ENCODE measurements at regions of chr11 and their contacts with region 1.

Region 1: GRCh38 chr11:47847892-47848635 is at the start of gene NUP160:
- DNase-seq: peak; percentile 74 to 95 (median 92)

Region 2: DNA sequence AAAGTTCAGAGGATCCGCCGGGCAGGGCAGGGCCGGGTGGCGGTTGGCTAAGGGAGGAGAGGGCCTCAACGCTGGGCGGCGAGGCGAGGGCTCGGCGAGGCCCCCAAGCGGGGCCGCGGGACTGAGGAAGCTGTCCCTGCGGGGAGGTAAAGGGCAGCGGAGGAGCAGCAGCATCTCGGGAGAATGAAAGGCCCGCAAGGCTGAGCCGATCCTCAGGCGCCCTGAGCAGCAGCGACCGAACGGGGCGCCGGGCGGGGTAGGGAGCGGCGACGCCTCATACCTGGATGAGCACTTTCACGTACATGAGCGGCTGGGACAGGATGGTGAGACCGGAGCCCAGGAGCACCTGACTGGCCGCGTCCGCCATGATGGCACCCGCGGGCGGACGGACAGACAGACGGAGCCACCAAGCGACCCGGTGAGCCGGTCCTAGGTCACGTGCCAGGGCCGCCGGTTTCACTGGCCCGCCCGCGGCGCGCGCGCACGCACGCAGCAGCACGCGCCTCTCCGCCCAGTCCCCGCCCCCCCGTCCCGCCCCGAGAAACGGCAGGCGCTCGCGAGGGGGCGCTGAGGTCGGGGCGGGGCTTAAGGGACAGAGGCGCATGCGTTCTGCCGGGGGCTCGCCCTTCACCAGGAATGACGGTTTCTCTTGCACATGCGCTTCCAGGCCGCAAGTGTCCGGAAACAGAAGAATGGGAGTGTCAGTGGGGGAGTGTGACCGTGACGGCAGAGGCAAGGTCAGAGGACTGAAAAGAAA is 205.8 kb before region 1 on chr11 and contains the start of gene MTCH2:
- intact Hi-C with region 1: loop called (anchors 5 kb)
- DNase-seq: peak; percentile 89 to 98 (median 94)

Region 3: DNA sequence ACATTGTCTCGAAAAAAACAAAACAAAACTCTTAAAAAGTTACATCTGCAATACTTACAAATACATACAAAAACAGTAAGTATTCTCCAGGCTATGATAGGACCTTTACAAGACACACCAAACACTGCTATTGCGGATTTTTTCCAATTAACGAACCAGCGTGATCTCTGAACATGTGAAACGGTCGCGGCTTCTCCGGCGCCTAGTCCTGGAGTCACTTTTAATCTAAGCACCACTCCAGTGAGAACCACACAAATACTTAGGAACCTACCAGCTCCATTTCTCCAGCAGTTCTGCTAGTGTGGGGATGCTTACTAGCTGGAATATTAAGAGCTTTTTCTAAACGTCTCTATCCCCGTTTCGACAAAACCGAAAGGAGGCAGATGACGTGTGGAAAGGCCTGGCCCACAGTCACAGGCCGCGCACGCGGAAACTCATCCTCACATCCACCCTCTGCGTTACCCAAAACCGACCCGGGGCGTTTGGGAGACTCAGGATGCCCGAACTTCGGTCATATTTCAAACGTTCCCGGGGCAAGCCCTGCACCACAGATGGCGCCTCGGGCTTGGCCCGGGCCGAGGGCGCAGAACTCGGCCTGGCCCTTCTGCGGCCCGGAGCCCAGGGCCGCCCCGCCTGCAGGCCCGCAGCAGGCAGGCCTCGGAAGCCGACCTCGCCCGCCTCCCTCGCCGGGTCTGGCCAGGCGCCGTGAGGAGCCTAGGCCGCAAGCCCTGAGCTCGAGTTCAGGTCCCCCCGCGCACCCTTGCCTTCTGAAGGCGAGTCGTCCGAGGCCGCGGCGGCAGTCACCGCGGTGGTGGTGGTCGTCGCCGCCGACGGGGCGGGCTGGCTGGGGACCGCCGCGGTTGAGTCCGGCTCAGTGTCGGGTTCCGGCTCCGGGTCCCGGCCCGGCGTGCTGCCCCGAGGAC is 81.5 kb before region 1 on chr11:
- intact Hi-C with region 1: loop called (anchors 5 kb)
- DNase-seq: peak; percentile 33 to 85 (median 71)

Region 4: DNA sequence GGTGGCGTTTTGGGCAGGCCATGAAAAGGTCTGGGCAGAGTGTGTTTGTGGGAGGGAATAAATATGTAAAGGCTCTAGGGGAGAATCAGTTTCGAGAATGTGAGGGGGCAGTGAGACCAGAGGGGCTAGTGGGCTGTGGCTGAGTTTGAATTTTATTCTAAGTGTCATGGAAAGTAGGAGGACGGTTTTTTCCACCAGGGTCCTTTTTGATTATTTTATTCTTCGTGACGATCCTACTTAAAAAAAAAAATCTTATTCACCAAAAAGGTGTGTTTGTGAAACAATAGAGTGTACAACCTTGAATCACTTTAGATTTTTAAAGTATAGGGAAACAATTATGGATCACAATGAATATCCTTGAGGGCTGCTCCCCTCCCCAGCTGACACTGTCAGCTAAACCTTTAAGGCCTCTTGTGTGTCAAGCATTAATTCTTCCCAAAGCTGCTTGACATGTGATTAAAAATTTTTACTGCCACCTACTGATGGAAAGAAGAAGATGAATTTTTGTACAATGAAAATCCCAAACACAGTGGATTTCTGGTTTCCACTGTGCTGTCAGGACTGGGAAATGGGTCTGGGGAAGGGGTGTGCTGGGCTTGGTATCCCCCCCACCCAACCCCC is 261.1 kb after region 1 on chr11:
- intact Hi-C with region 1: loop called (anchors 10 kb)
- DNase-seq: peak in 2 of 42 donors; percentile 10 to 44

Measured in head of caudate nucleus (tissue), 42 donors.